ENCODE measurements at regions of chr15 and their contacts with region 1.

Region 1: GRCh38 chr15:41557673-41558399 is 1.2 kb upstream of the TYRO3 start:
- DNase-seq: peak; percentile 62 to 95 (median 87)

Region 2: GRCh38 chr15:41585127-41586047 is 27.6 kb after region 1 on chr15:
- intact Hi-C with region 1: loop called (anchors 1 kb)
- DNase-seq: peak in 41 of 42 donors; percentile 42 to 87 (median 66)

Region 3: DNA sequence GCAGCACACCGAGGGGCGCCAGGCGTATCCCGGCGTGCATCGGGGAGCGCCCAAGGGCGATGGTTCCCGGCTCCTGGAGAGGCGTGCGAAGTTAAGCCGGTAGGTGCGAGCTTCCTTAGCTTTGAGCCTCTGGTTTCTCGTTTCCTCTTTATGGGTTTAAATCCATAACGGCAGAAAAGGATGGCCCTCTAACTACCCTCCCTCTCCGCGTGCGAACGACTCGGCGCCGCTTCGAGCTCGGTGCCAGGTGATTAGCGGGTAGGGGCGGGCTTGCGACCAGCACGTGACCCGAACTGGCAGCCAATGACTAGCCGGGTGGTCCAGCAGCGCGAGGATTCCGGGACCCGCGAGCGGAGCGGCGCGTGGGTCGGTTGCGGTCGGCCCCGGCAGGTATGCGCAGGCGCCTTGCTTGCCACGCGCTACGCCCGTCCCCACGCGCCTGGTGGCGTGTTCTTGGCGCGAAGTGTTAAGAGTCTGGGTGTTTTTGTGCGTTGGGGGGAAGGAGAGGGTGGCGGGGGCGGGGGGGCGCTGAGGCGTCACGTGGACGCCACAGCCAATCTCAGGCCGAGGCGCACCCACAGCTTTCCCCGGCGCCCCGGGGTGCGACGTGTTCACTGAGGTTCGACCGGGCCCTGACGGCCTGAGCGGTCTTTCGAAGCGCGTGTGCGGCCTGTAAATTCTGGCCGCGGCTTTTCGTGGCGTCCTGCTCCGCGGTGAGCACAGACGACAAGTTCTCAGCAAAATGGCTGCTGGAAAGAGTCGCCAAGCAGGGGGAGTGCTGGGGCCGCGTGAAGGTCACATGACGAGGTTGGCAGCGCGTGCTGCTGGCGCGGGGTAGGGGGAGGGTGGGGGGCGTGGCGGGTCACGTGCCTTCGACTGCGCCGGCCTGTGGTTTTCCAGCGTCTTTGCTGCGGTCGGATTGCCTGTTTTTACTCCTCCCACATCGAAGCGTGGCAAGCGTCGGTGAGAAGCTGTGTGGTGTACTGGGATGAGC is 63.7 kb after region 1 on chr15:
- intact Hi-C with region 1: loop called (anchors 5 kb)
- DNase-seq: peak; percentile 75 to 95 (median 89)

Region 4: DNA sequence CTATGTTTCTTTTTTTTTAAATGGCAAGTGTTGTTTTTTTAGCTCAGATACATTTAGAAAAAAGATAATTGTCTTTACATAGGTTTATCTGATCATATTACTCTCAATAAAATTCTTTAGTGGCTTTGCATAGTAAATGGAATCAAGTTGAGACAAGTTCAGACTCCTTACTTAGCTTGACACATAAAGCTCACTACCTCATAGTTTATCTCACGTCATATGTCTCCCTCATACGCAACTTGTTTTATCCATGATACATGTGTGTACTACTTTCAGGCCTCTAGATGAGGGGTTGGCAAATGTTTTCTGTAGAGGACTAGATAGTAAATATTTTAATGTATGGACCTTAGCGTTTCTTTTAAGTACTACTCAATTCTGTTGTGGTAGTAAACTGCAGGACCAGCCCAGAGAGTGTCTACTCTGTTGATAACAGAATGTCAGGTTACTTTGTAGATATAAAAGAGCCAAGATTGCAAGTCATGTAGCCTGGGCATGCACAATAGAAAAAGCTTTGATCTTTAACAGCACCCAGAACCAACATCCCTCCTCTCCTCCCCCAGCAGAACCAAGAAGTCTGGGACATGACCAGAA is 74.1 kb after region 1 on chr15:
- intact Hi-C with region 1: no loop called
- DNase-seq: no peak

Region 5: DNA sequence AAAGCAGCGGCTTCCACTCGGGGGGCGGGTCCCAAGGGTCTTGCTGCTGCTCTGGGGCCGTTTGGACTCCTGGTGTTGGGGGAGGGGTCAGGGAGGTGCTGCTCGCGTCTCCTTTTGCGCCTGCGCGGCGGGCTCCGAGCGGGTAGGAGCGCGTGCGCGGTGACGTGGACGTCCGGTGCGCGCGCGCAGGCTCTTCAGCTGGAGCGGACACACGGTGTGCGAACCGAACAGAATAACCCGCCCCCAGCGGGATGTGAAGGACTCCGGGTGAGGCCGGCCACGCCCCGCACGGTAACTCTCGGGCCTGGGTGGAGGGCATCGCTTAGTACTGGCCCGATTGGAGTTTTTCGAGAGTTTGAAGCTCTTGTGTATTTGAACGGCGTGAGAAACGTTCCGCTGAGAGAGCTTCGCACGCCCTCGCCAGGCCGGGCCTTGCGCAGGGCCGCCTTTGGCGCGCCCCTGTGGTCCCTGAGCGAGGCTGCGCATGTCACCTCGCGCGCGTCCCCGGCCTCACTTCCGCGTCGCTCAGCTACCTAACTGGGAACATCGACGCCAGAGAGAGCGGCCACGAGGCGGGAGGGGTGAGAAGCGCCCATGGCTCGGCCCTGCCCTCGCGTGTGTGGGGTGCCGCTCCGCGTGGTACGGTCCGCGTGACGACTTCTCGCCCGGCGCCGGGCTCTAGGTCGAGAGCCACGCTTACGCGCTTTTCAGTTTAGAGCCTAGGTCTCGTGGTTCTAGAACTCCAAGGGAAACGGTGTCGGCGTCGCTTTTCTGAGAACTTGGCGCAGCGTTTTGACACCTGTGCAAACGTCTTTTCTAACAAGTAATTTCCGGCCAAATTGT is 102.6 kb after region 1 on chr15 and contains the start of gene MGA:
- intact Hi-C with region 1: loop called (anchors 5 kb)
- DNase-seq: peak; percentile 53 to 91 (median 82)

Region 6: DNA sequence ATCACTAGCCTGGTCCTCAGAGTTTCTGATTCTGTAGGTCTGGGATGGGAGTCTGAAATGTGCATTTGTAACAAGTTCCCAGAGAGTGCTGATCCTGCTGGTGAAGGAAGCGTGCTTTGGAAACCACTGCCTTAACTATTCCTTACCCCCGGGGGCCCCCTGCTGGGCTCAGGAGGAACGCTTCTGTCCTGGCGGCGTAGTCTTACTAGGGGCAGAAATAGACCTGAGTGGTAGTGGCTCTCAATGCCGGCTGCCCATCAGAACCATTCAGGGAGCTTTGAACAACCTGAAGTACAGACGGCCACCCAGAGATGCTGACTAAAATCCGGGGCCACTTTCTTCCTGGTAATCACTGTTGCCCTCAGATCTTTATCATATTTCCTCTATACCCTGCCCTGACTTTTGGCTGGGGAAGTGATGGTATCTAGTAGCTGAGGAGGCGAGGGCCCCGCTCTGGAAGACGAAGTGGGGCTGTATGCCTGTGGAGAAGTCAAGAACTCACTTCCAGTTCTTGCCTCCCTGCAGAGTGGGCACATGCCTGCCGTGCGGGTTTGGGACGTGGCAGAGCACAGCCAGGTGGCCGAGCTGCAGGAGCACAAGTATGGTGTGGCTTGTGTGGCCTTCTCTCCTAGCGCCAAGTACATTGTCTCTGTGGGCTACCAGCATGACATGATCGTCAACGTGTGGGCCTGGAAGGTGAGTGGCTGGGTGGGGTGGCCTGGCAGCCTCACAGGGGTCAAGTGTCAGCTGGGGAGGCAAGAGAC is 253.8 kb after region 1 on chr15:
- intact Hi-C with region 1: loop called (anchors 5 kb)
- DNase-seq: peak; percentile 76 to 97 (median 92)

Measured in head of caudate nucleus (tissue), 42 donors.